Activated CD8-positive, alpha-beta T cell treated with anti-CD3 and anti-CD28 coated beads for 36 hours (primary cell): ENCODE measurements at regions of chr1 and their contacts with region 1.

Region 1: DNA sequence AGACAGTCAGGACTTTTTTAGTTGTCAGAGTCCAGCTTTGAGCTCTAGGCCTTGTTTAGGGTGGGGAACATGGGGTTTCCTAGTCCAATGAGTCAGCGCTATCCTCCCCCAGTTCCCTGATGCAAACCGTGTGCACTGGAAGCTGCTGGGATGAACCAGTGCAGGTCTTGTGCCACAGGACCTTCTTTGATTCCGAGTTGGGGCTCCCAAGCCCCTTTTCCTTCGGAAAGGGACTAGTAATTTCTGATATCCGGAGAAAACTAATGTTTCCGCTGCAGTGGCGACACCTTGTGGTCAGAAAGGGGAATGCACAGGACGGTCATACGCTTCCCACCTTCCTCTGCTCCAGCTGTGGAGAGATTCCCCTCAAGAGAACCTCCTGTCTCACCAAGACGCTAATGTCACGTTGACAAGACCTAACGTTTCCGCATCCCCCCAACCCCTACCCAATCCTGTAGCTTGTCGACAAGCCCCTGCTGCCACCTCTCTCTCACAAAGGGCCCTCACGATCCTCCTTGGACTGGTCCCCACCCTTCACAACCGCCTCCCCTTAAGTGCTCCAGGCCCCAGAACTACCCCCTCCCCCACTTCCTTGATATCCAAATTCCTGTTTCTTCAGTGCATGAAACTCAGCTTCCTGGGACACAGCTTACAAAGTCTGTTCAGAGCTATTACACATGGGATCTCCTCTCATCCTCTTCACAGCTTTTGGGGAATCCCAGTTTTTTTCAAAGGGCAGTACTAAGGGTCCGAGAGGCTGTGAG is 30.9 kb downstream of the GPA33 start:
- DNase-seq: peak; percentile 85
- ATAC-seq: peak; percentile 70
- H3K4me3 Mint-ChIP-seq: peak overlapping the region; percentile 12
- H3K27ac Mint-ChIP-seq: peak overlapping the region; percentile 66
- H3K4me1 Mint-ChIP-seq: peaks cover 7% of the 10 kb centered on the region
- H3K27me3 Mint-ChIP-seq: no peaks in the 10 kb centered on the region
- CTCF ChIP-seq: peak; percentile 98

Region 2: GRCh38 chr1:166875734-166876539 is 183.3 kb before region 1 on chr1 and contains the start of gene TADA1:
- CTCF ChIA-PET with region 1: interaction called, 89 read pairs
- POLR2A ChIA-PET with region 1: interaction called, 4 read pairs
- intact Hi-C with region 1: no loop called
- DNase-seq: peak; percentile 100
- ATAC-seq: peak; percentile 92
- H3K4me3 Mint-ChIP-seq: peak within 1 kb of the TSS; percentile 92
- H3K27ac Mint-ChIP-seq: peak within 1 kb of the TSS; percentile 99
- H3K4me1 Mint-ChIP-seq: peaks cover 42% of the 10 kb centered on the region
- H3K27me3 Mint-ChIP-seq: peaks cover 4% of the 10 kb centered on the region
- CTCF ChIP-seq: no peak
- total RNA-seq, gene TADA1: 14.3 to 15.7 TPM

Region 3: DNA sequence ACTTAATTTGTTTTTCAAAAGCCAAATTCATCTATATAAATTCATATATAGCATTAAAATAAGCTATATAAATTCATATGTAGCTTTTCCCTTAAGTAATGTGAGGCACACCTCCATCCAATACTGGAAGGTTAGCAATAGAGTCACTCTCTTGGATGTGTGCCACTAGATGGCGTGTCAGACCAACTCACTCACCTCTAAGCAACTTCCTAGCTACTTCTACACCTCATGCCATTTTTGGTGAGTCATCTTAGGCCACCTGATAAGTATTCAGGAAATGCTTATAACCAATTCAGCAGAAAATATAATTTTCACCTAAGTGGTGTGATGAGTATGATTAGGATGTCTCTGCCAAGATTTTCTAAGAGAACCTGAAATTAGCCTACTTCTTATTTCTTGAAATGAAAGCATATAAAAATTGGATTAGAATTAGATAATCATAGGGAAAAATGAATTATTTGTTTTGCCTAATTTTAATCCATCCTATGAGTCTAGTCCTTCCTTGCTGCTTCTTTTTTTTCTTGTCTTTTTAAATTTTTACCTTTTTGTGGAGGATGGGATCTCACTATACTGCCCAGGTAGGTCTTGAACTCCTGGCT is 148.7 kb before region 1 on chr1:
- CTCF ChIA-PET with region 1: interaction called, 863 read pairs
- POLR2A ChIA-PET with region 1: interaction called, 14 read pairs
- intact Hi-C with region 1: loop called (anchors 1 kb)
- DNase-seq: peak; percentile 89
- ATAC-seq: peak; percentile 94
- H3K4me3 Mint-ChIP-seq: no peak overlapping the region
- H3K27ac Mint-ChIP-seq: no peak overlapping the region
- H3K4me1 Mint-ChIP-seq: peaks cover 14% of the 10 kb centered on the region
- H3K27me3 Mint-ChIP-seq: peaks cover 4% of the 10 kb centered on the region
- CTCF ChIP-seq: peak; percentile 82

Region 4: GRCh38 chr1:166960858-166961474 is 98.3 kb before region 1 on chr1:
- CTCF ChIA-PET with region 1: no interaction called
- POLR2A ChIA-PET with region 1: no interaction called
- intact Hi-C with region 1: no loop called
- DNase-seq: no peak
- ATAC-seq: no peak
- H3K4me3 Mint-ChIP-seq: no peak overlapping the region
- H3K27ac Mint-ChIP-seq: no peak overlapping the region
- H3K4me1 Mint-ChIP-seq: peaks cover 2% of the 10 kb centered on the region
- H3K27me3 Mint-ChIP-seq: peaks cover 16% of the 10 kb centered on the region
- CTCF ChIP-seq: no peak

Region 5: DNA sequence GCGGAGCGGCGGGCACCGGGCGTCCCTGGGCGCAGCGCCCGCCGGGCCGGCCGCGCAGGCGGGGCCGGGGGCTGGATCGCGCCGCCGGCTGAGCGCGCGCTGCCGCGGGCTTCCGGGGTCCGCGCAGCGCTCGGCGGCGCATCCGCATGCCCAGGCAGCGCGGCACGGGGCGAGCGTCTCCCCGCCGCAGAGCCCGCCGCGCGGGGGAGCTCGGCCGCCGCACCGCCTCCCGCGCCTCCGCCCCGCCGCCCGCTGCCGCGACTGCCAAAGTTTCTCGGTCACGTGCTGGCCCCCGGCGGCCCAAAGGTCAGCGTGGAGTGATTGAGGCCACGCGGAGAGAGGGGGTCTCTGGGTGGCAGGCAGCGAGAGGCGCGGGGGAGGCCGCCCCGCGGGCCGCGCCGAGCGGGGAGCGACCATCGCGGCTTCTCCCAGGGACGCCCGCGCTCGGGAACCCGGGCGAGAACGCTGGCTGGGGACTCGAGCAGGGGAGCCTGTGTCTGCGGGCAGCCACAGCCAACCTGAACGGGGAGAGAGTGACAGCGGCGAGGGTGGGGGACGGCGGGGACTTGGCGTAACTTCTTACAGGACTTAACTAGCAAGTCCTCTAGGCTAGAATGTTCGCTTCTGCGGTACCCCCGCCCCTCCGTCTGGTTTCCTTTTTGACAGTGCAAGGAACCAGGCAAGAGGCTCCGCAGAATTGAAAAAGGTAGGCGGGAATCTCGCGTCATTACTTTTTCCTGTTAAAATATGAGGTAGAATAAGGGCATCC is 83.7 kb before region 1 on chr1 and contains the start of gene ILDR2:
- CTCF ChIA-PET with region 1: interaction called, 47 read pairs
- POLR2A ChIA-PET with region 1: interaction called, 3 read pairs
- intact Hi-C with region 1: loop called (anchors 5 kb)
- DNase-seq: peak; percentile 91
- ATAC-seq: peak; percentile 70
- H3K4me3 Mint-ChIP-seq: peak within 1 kb of the TSS; percentile 89
- H3K27ac Mint-ChIP-seq: peak within 1 kb of the TSS; percentile 90
- H3K4me1 Mint-ChIP-seq: peaks cover 51% of the 10 kb centered on the region
- H3K27me3 Mint-ChIP-seq: peaks cover 26% of the 10 kb centered on the region
- CTCF ChIP-seq: no peak
- total RNA-seq, gene ILDR2: 14.3 to 15.1 TPM

Region 6: GRCh38 chr1:167043752-167044488 is 15.3 kb before region 1 on chr1:
- CTCF ChIA-PET with region 1: interaction called, 36 read pairs
- POLR2A ChIA-PET with region 1: interaction called, 4 read pairs
- intact Hi-C with region 1: no loop called
- DNase-seq: peak; percentile 91
- ATAC-seq: peak; percentile 99
- H3K4me3 Mint-ChIP-seq: peak overlapping the region; percentile 78
- H3K27ac Mint-ChIP-seq: peak overlapping the region; percentile 85
- H3K4me1 Mint-ChIP-seq: peaks cover 18% of the 10 kb centered on the region
- H3K27me3 Mint-ChIP-seq: peaks cover 5% of the 10 kb centered on the region
- CTCF ChIP-seq: no peak

Region 7: GRCh38 chr1:167090314-167090942 is 31.2 kb after region 1 on chr1 and contains the start of gene GPA33:
- CTCF ChIA-PET with region 1: interaction called, 21 read pairs
- POLR2A ChIA-PET with region 1: no interaction called
- intact Hi-C with region 1: no loop called
- DNase-seq: peak; percentile 20
- ATAC-seq: peak; percentile 79
- H3K4me3 Mint-ChIP-seq: no peak within 1 kb of the TSS
- H3K27ac Mint-ChIP-seq: peak within 1 kb of the TSS; percentile 87
- H3K4me1 Mint-ChIP-seq: peaks cover 32% of the 10 kb centered on the region
- H3K27me3 Mint-ChIP-seq: no peaks in the 10 kb centered on the region
- CTCF ChIP-seq: no peak
- total RNA-seq, gene GPA33: 0.25 TPM in 1 of 2 experiments, not detected in the other

Region 8: GRCh38 chr1:167220537-167221125 is 161.4 kb after region 1 on chr1 and contains the start of gene POU2F1:
- CTCF ChIA-PET with region 1: interaction called, 19 read pairs
- POLR2A ChIA-PET with region 1: interaction called, 4 read pairs
- intact Hi-C with region 1: no loop called
- DNase-seq: peak; percentile 99
- ATAC-seq: peak; percentile 81
- H3K4me3 Mint-ChIP-seq: peak within 1 kb of the TSS; percentile 92
- H3K27ac Mint-ChIP-seq: peak within 1 kb of the TSS; percentile 99
- H3K4me1 Mint-ChIP-seq: peaks cover 43% of the 10 kb centered on the region
- H3K27me3 Mint-ChIP-seq: no peaks in the 10 kb centered on the region
- CTCF ChIP-seq: peak; percentile 11
- total RNA-seq, gene POU2F1: 23.6 to 24.2 TPM

Region 9: GRCh38 chr1:167244244-167244643 is 185.0 kb after region 1 on chr1:
- CTCF ChIA-PET with region 1: no interaction called
- POLR2A ChIA-PET with region 1: no interaction called
- intact Hi-C with region 1: no loop called
- DNase-seq: no peak
- ATAC-seq: no peak
- H3K4me3 Mint-ChIP-seq: no peak overlapping the region
- H3K27ac Mint-ChIP-seq: no peak overlapping the region
- H3K4me1 Mint-ChIP-seq: peaks cover 16% of the 10 kb centered on the region
- H3K27me3 Mint-ChIP-seq: no peaks in the 10 kb centered on the region
- CTCF ChIP-seq: no peak